ENCODE measurements at regions of chr5 and their contacts with region 1.

Region 1: DNA sequence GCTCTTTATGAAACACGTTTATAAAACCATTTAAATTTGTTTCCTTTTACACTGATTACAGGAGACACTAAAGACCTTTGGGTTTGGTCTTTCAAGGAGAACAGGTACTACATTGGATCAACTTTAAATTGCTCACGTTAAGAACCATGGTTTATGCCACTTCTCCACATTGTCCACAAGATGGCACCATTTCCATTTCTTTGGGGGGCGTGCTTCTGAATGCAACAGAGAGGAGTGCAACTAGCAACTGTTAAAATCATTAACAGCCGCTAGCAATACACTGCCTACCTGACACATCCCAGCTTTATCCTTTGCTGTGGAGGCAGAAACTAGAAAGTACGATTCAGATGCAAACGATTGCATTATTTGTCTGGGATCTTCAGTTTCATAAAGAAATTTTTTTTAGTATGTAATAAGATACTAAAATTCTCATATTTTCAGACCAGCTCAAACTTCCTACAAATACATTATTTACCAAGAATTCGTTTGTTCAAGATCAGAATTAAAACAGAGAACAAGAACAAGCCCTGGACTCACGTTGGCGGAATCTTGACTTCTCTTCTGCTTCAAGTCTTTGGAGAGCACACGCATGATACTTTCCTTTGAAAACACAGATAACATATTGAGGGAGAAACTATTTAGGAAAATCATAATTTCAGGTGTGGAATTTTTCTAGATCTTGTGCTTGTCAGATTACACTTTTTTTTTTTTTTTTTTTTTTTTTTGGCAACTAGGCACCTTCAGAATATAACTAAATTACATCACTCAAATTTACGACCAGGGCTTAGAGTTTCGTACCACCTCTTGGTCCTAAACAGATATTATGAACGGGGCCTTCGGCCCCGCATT is 702 bp downstream of the CDC20B start:
- H3K4me3 ChIP-seq: peak overlapping the region; percentile 49
- H3K27ac ChIP-seq: no peak overlapping the region
- H3K4me1 ChIP-seq: no peaks in the 10 kb centered on the region; the same call in 1 of the 2 replicates
- CTCF ChIP-seq: peak; percentile 83

Region 2: DNA sequence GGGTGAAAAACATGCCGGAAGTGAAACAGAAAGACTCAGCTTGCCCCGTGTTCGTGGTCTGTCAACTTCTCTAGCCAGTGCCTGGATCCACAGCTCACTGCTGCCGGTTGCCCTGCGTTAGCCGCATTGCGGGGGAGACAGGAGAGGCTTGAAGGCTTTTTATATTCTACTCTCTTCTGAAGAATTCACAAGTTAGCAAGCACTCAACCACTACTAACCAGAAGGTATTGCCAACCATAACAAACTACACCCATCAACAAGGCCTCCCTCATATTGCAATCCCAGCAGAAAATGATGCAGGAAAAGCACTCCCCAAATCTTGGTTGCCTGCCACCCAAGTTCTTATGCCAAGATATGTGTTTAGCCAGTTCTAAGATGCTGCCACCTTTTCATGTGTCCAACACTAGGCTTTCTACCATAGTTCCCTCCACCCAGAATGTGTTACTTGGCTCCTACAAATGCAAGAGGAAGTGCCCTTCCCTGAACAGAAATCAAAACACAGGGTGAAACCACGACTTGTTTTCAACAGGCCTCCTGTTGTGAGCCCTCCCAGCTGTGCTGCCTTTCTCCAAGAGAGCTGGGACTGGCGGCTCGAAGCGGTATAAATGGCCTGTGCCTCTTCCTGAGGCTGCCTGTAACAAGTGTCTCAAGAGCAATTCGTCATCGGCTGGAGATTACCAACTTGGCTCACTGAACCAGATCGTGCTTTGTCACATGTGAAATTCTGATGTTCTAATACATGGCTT is 525.7 kb before region 1 on chr5:
- CTCF ChIA-PET with region 1: no interaction called
- POLR2A ChIA-PET with region 1: no interaction called
- H3K4me3 ChIP-seq: no peak overlapping the region
- H3K27ac ChIP-seq: no peak overlapping the region
- H3K4me1 ChIP-seq: peaks cover 4% of the 10 kb centered on the region; the same call in 1 of the 2 replicates
- CTCF ChIP-seq: no peak

Region 3: DNA sequence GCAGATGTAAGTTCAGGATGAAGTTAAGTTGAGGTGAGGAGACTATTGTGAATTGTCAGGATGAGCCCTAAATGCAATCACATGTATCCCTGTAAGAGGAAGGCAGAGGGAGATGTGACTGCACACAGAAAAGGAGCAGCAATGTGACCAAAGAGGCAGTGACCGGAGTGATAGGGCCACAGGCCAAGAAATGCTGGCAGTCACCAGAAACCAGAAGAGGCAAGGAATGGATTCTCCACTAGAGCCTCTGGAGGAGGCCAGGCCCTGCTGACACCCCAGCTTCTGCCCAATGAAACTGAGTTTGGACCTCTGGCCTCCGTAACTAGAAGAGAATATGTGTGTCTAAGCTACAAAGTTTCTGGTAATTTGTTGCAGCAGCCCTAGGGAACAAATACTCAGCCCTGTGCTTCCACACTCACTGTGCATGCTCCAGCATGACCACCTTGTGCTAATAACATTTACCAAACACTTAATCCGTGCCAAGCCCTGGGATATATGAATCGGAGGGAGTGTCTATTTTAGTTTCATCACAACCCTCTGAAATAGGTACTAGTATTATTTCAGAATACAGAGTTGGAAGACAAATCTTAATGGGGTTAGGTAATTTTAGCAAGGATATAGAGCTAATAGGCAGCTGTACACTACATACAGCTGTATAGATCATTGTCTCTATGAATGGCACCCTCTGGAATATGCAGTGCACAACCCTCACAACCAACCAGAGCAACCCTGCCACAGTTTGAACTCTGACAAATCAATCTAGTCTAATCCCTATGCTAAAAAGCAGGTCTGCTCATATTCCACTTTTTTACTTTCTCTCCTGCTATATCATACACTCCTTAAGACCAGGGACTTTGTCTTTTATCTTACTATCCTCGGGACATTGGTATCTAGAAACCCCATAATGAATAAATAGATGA is 20.1 kb before region 1 on chr5:
- CTCF ChIA-PET with region 1: no interaction called
- POLR2A ChIA-PET with region 1: no interaction called
- H3K4me3 ChIP-seq: no peak overlapping the region
- H3K27ac ChIP-seq: no peak overlapping the region
- H3K4me1 ChIP-seq: no peaks in the 10 kb centered on the region
- CTCF ChIP-seq: no peak

Region 4: DNA sequence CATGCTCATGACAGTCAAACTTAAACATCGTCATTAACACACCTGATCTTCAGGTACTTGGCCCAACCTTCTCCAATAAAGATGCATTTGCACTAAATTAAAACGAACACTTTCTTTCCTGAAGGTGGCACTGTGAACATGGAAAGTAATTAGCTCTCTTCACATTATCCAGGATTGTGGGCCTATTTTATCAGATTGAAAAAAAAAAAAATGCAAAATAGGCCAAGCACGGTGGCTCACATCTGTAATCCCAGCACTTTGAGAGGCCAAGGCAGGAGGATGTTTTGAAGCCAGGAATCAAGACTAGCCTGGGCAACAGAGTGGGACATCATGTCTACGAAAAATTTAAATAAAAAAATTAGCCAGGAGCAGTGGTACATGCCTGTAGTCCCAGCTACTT is 15.1 kb after region 1 on chr5:
- CTCF ChIA-PET with region 1: interaction called, 29 read pairs
- POLR2A ChIA-PET with region 1: interaction called, 3 read pairs
- H3K4me3 ChIP-seq: no peak overlapping the region
- H3K27ac ChIP-seq: no peak overlapping the region
- H3K4me1 ChIP-seq: peaks cover 10% of the 10 kb centered on the region; the same call in 1 of the 2 replicates
- CTCF ChIP-seq: no peak; the same call in 1 of the 2 replicates

Region 5: DNA sequence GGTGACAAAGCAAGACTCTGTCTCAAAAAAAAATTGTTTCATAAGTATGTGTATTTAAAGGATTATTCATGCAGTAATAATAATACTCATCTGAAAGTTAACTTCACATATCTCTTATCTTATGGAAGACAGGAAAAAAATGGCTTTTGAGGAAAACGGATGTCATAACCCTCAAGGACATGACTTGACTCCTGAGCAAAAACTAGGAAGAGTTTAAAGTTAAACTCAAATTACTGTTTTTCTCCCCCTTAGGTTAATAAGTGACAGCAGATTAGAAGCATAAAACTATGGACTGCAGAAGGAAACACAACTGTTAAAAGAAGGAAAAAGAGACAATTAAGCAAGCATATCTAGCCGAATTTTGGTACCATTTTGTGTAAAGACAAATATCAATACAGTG is 118.7 kb after region 1 on chr5:
- CTCF ChIA-PET with region 1: no interaction called
- POLR2A ChIA-PET with region 1: no interaction called
- H3K4me3 ChIP-seq: no peak overlapping the region
- H3K27ac ChIP-seq: no peak overlapping the region
- H3K4me1 ChIP-seq: no peaks in the 10 kb centered on the region
- CTCF ChIP-seq: no peak